Activated CD4-positive, alpha-beta T cell treated with anti-CD3 and anti-CD28 coated beads, Interleukin-2, amount 10 ng/mL, durations not matched to agents 24 days and 14 days (primary cell): ENCODE measurements at regions of chr6 and their contacts with region 1.

Region 1: GRCh38 chr6:137791281-137792159 is 75.5 kb upstream of the TNFAIP3 start:
- DNase-seq: no peak
- H3K4me3 Mint-ChIP-seq: peak overlapping the region; percentile 29
- H3K27ac Mint-ChIP-seq: peak overlapping the region; percentile 78
- H3K4me1 Mint-ChIP-seq: peaks cover 62% of the 10 kb centered on the region
- H3K27me3 Mint-ChIP-seq: no peaks in the 10 kb centered on the region

Region 2: DNA sequence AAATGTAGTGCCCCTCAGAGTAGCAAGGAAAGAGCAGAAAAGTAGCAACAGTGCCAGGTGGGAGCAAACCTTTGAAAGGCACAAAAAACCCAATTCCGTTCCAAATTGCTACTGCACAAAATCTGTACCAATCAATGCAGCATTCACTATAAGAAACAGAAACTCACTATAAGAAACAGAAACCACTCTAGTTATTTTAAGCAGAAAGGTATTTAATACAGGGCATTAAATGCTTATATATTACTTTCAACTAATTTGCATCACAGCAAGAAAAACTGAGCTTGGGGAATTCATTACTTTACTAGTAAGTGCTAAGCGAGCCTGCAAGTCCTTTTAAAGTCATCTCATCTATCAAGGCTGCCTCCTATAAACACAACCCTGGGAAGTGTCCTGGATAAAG is 180.8 kb before region 1 on chr6:
- intact Hi-C with region 1: no loop called
- DNase-seq: no peak
- H3K4me3 Mint-ChIP-seq: no peak overlapping the region
- H3K27ac Mint-ChIP-seq: no peak overlapping the region
- H3K4me1 Mint-ChIP-seq: no peaks in the 10 kb centered on the region
- H3K27me3 Mint-ChIP-seq: peaks cover 42% of the 10 kb centered on the region

Region 3: GRCh38 chr6:137717074-137718073 is 74.1 kb before region 1 on chr6:
- intact Hi-C with region 1: loop called (anchors 1 kb)
- DNase-seq: peak; percentile 95
- H3K4me3 Mint-ChIP-seq: peak overlapping the region; percentile 13
- H3K27ac Mint-ChIP-seq: peak overlapping the region; percentile 91
- H3K4me1 Mint-ChIP-seq: peaks cover 51% of the 10 kb centered on the region
- H3K27me3 Mint-ChIP-seq: no peaks in the 10 kb centered on the region

Region 4: GRCh38 chr6:137754366-137754765 is 37.2 kb before region 1 on chr6:
- intact Hi-C with region 1: no loop called
- DNase-seq: no peak
- H3K4me3 Mint-ChIP-seq: no peak overlapping the region
- H3K27ac Mint-ChIP-seq: no peak overlapping the region
- H3K4me1 Mint-ChIP-seq: peaks cover 21% of the 10 kb centered on the region
- H3K27me3 Mint-ChIP-seq: peaks cover 2% of the 10 kb centered on the region

Region 5: DNA sequence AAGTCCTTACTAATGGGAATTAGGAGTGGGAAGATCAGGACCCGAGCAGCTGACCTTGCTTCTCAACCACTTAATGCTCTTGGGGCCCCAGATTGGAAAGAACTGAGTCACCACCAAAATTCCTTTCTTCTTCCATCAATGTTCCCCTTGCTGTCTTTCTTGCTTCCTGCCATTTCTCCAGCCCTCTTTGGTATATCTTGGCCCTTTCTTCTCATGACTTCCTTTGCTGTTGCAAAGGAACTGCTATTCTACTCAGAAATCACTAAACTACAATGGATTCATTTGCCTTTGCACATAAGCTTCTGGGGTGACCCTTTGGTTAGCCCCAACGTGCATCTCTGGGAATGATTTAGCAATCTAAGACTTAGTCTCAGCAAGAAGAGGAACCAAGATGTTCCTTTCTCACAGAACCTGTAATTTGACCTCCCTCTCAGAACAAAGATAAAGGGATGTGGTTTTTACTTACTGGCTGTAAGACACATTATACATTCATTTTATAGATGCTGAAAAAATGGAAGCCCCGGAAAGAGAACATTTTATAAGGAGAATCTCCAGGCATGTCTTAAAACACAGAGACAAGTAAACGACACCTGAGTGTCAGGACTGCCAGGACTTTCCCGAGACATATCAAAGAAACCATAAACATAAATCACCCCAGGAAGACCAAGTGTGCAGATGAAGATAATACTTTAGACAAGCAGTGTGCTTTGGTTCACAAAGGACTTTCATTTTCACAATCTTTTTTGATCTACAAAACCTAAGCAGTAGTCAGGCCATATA is 23.4 kb before region 1 on chr6:
- intact Hi-C with region 1: no loop called
- DNase-seq: peak; percentile 73
- H3K4me3 Mint-ChIP-seq: peak overlapping the region; percentile 47
- H3K27ac Mint-ChIP-seq: peak overlapping the region; percentile 87
- H3K4me1 Mint-ChIP-seq: peaks cover 24% of the 10 kb centered on the region
- H3K27me3 Mint-ChIP-seq: no peaks in the 10 kb centered on the region

Region 6: DNA sequence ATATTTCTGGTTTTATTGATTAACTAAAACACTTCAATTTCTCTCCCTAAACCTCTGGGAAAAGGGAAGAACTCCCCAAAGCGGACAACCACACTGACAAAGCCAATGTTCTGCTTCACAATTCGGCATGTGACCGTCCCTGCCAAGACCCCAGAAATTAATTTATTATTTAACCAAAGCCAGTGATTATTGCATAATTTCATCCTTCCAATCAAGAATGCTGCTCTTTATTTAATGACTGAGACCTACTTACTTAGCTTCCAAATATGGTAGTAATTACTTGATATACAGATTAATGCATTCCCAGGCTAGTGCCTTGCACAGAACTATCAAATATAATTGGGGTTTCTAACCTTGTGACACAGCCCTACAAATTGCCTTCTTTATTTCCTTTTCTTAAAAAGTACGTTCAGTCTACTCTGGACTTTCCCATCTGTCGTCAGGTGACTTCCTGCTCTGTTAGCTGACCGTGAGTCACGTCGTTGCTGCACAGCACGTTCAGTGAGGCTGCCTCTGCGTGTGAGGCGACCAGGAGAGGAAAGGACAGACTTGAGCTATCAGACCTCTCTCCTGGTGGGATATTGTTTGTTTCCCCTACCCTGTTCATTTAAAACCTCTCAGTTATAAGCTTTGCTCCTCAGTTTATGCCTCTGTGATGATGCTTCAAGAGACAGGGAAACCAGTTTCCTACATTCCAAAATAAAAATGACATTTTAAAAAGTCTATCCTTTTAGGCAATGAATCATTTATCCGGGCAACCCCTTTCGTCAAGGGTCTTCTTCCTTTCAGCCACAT is 19.8 kb after region 1 on chr6:
- intact Hi-C with region 1: loop called (anchors 1 kb)
- DNase-seq: peak; percentile 94
- H3K4me3 Mint-ChIP-seq: peak overlapping the region; percentile 2
- H3K27ac Mint-ChIP-seq: peak overlapping the region; percentile 55
- H3K4me1 Mint-ChIP-seq: peaks cover 55% of the 10 kb centered on the region
- H3K27me3 Mint-ChIP-seq: no peaks in the 10 kb centered on the region

Region 7: DNA sequence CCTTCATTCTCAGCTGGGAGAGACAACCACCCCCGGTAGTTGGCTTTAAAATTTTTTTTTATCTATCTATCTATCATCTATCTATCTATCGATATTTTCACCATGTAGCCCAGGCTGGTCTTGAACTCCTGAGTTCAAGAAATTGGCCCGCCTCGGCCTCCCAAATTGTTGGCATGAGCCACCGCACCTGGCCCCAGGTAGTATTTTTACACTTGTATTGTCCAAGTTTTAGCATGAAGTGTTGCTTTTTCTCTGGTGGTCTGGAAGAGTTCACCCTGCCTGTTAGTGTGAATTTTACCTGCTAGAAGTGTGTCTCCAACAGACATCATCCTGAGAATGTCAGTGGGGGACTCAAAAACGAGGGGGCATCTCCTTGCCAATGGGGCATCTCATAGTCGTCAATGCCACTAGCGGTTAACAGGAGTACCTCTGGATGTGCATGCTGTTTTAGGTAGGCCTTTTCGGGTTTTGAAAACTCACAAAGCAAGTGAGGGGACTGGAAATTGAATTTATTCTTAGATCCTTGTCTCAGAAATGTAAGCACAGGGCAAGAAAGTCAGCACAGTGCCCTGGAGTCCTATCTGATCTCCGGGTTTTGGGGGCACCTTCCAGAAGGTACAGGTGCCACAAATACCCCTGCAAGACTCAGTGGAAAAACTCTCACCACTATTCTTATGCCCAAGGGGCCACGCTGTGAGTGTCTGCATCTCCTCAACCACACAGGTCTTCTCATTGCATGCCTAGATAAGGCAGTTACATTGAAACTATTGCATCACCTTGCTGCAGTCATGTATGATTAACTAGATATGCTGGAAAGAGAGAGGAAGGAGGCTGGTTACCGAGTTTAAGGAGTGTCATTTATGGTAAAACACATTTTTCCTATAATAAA is 112.7 kb after region 1 on chr6:
- intact Hi-C with region 1: loop called (anchors 1 kb)
- DNase-seq: peak; percentile 81
- H3K4me3 Mint-ChIP-seq: peak overlapping the region; percentile 75
- H3K27ac Mint-ChIP-seq: peak overlapping the region; percentile 99
- H3K4me1 Mint-ChIP-seq: peaks cover 50% of the 10 kb centered on the region
- H3K27me3 Mint-ChIP-seq: no peaks in the 10 kb centered on the region